ENCODE measurements at regions of chr12 and their contacts with region 1.

Region 1: DNA sequence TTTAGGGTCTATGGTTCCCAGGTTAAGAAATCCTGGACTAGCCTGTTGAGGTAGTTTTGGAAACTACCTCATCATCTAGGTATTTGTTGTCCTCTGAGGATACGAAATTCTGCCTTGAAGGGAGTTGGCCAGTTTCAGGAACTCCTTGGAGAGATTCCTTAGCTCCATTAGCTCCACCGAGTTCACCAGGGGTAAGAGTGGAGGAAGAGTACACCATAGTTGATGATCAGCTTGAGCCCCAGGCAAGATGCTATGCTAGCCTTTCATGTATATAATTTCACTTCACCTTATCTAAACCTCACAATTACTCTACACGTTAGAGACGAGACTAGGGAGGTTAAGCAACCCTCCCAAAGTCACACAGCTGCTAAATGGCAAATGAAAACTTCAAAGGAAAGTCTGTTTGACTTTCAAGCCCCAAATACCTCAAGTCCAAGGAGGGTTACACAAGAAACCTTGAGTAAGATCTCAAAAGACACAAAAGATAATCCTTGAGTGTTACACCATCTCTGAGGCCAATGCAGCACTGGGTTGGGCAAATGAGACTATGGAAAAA is 97.1 kb upstream of the KRAS start:
- DNase-seq: no peak
- H3K4me3 ChIP-seq: no peak overlapping the region
- H3K27me3 ChIP-seq: no peaks in the 10 kb centered on the region
- CTCF ChIP-seq: no peak

Region 2: GRCh38 chr12:25364529-25365339 is 16.9 kb after region 1 on chr12:
- CTCF ChIA-PET with region 1: no interaction called
- POLR2A ChIA-PET with region 1: no interaction called
- DNase-seq: no peak
- H3K4me3 ChIP-seq: no peak overlapping the region
- H3K27me3 ChIP-seq: no peaks in the 10 kb centered on the region
- CTCF ChIP-seq: no peak

Region 3: DNA sequence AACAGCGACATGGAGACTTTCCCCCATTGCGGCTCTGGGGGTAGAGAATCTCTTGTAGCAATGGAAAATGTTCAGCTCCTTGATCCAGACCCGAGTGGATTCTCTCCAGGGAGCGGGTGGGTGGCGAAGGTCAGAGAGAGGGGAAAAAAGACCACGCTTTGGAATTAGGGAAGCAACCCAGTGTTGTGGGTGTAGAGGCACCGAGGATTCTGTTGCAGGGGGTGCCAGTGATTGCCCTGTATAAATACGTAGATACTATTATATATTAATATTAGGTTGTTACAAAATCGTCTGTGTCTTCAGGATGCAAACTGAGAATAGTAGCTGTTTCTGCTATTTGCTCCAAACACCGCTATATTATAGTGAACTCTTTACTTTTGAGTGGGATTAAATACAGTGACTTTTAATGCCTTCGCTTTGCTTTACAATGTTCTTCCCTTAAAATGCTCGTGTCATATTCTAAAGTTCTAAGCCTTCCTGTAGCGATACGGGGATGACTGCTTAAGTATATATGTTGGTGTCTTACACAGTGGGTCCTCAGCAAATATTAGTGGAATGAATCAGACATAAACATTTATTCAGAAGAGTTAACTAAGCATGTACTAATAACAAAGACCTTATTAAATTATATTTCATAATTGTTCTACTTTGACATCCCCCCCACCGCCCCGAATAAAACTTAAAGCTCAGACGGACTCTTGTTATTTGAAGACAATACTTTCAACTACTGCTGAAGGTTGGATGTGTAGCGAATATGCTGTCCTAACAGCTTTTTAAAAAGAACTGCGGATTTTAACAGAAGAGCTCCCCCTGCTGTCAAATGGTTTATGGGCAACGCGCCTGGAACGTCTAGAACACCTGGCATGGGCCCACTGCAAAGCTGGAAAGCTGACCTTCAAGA is 39.3 kb after region 1 on chr12:
- CTCF ChIA-PET with region 1: interaction called, 3 read pairs
- POLR2A ChIA-PET with region 1: interaction called, 14 read pairs
- DNase-seq: peak; percentile 44
- H3K4me3 ChIP-seq: peak overlapping the region; percentile 56
- H3K27me3 ChIP-seq: no peaks in the 10 kb centered on the region
- CTCF ChIP-seq: peak; percentile 82